ENCODE measurements at regions of chr3 and their contacts with region 1.

Region 1: DNA sequence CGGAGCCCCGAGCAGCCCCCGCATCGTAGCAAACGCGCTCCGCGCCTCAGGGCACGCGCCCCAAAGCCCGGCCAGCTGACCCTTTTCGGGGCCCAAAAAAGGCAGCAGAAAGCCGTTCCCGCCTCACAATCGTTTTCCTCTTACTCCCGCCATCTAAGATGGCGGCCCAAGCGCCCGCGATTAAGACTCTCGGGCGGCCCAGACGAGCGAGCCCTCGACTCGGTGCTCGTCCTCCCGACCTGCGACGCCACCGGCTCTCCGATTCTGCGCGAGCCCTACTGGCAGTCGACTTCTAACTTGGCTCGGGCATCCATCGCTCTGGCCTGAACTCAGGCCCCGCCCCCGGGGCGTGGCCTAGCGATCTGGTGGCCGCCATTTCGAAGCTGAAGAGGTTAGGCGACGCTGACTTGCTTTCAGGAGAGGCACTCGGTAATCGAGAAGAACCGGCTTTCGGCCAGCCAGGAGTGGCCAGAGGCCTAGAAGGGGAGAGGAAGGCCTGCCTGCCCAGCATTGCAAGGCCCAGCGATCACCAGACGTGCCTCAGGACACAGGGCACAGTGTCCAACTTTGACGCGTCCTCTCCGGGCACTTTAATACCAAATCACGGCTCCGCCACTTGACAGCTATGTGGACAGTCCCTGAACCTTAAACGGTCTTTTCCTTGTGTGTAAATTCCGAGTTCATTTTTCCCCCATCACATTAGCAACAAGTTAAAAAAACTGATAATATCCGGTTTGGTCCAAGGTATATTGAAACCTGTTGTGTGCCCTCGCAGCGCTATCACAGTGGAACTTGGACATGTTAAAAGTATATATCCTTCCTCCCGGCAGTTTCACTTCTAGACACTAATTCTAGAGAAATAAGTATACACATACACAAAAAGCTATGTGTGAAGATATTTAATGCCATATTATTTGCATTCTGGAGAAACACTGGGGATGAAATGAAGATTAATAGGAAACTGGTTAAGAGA is at the start of gene RAF1:
- DNase-seq: peak; percentile 96 to 99 (median 97)
- ATAC-seq: peak; percentile 92
- H3K4me3 ChIP-seq: peak within 1 kb of the TSS; percentile 83
- H3K4me3 Mint-ChIP-seq: peak within 1 kb of the TSS; percentile 100
- H3K27ac ChIP-seq: peak within 1 kb of the TSS; percentile 94 to 99
- H3K27ac Mint-ChIP-seq: peak within 1 kb of the TSS; percentile 94
- H3K4me1 ChIP-seq: peaks cover 32% of the 10 kb centered on the region
- H3K4me1 Mint-ChIP-seq: peaks cover 44% of the 10 kb centered on the region
- H3K27me3 ChIP-seq: no peaks in the 10 kb centered on the region
- H3K27me3 Mint-ChIP-seq: no peaks in the 10 kb centered on the region
- CTCF ChIP-seq: no peak
- total RNA-seq, gene RAF1: 127 to 139 TPM

Region 2: GRCh38 chr3:11271986-11272904 is 1392.0 kb before region 1 on chr3 and contains the start of gene ATG7:
- CTCF ChIA-PET with region 1: no interaction called
- POLR2A ChIA-PET with region 1: no interaction called
- intact Hi-C with region 1: loop called in 1 of 2 experiments (anchors 10 kb)
- DNase-seq: peak; percentile 92 to 99 (median 96)
- ATAC-seq: peak; percentile 96
- H3K4me3 ChIP-seq: peak within 1 kb of the TSS; percentile 90
- H3K4me3 Mint-ChIP-seq: peak within 1 kb of the TSS; percentile 98
- H3K27ac ChIP-seq: peak within 1 kb of the TSS; percentile 78 to 90
- H3K27ac Mint-ChIP-seq: peak within 1 kb of the TSS; percentile 98
- H3K4me1 ChIP-seq: peaks cover 24% of the 10 kb centered on the region
- H3K4me1 Mint-ChIP-seq: peaks cover 54% of the 10 kb centered on the region
- H3K27me3 ChIP-seq: no peaks in the 10 kb centered on the region
- H3K27me3 Mint-ChIP-seq: no peaks in the 10 kb centered on the region
- CTCF ChIP-seq: no peak
- total RNA-seq, gene ATG7: 21.4 to 25.7 TPM

Region 3: DNA sequence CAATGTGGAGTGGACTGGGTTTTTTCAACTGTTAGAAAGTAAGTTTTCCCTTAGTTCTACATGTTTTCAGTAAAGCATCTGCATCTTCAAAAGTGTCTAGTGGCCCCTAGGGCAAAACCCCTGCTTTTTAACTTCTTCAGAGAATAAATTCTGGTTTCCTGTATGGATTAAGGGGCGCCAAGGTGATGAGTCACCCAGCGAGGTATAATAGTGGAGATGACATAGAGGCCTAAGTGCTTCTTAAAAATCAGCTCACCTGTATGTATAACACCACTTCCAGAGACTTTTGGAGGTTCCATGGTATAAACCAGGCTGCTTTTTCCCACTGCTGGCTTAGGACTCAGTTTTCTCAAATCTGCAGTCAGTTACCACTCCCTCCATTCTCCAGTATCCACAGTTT is 591.1 kb before region 1 on chr3:
- CTCF ChIA-PET with region 1: no interaction called
- POLR2A ChIA-PET with region 1: no interaction called
- intact Hi-C with region 1: no loop called
- DNase-seq: no peak
- ATAC-seq: no peak
- H3K4me3 ChIP-seq: no peak overlapping the region
- H3K4me3 Mint-ChIP-seq: no peak overlapping the region
- H3K27ac ChIP-seq: no peak overlapping the region
- H3K27ac Mint-ChIP-seq: no peak overlapping the region
- H3K4me1 ChIP-seq: no peaks in the 10 kb centered on the region
- H3K4me1 Mint-ChIP-seq: no peaks in the 10 kb centered on the region
- H3K27me3 ChIP-seq: no peaks in the 10 kb centered on the region
- H3K27me3 Mint-ChIP-seq: peaks cover 8% of the 10 kb centered on the region
- CTCF ChIP-seq: no peak

Region 4: GRCh38 chr3:12489832-12490231 is 174.4 kb before region 1 on chr3:
- CTCF ChIA-PET with region 1: no interaction called
- POLR2A ChIA-PET with region 1: interaction called, 22 read pairs
- intact Hi-C with region 1: loop called in 1 of 2 experiments (anchors 5 kb)
- DNase-seq: no peak
- ATAC-seq: no peak
- H3K4me3 ChIP-seq: no peak overlapping the region
- H3K4me3 Mint-ChIP-seq: no peak overlapping the region
- H3K27ac ChIP-seq: no peak overlapping the region
- H3K27ac Mint-ChIP-seq: no peak overlapping the region
- H3K4me1 ChIP-seq: peaks cover 8% of the 10 kb centered on the region
- H3K4me1 Mint-ChIP-seq: peaks cover 29% of the 10 kb centered on the region
- H3K27me3 ChIP-seq: no peaks in the 10 kb centered on the region
- H3K27me3 Mint-ChIP-seq: no peaks in the 10 kb centered on the region
- CTCF ChIP-seq: no peak

Region 5: DNA sequence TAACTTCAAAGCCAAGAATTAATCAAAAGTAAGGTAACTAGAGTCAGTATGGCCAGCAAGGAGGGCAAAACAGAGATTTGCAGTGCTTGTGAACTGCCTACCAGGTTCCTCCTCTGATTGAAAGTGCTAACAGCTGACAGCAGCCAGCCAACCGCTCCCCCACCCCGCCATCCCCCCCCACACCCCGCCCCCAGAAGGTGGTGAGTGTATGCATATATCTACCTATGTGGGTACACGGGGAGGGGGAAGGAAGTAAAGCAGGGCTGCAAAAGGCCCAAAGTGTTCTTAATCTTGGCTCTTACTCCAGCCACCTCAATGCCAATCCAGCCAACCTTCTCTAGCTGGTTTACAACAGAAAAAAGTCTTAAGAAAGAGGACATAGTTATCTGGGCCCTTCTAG is 51.0 kb before region 1 on chr3:
- CTCF ChIA-PET with region 1: interaction called, 3 read pairs
- POLR2A ChIA-PET with region 1: interaction called, 15 read pairs
- intact Hi-C with region 1: no loop called
- DNase-seq: peak in 3 of 14 experiments; percentile 14 to 43 (median 15)
- ATAC-seq: peak; percentile 71
- H3K4me3 ChIP-seq: no peak overlapping the region
- H3K4me3 Mint-ChIP-seq: no peak overlapping the region
- H3K27ac ChIP-seq: no peak overlapping the region
- H3K27ac Mint-ChIP-seq: peak overlapping the region; percentile 27
- H3K4me1 ChIP-seq: no peaks in the 10 kb centered on the region
- H3K4me1 Mint-ChIP-seq: peaks cover 55% of the 10 kb centered on the region
- H3K27me3 ChIP-seq: no peaks in the 10 kb centered on the region
- H3K27me3 Mint-ChIP-seq: no peaks in the 10 kb centered on the region
- CTCF ChIP-seq: no peak

Region 6: GRCh38 chr3:12706504-12707253 is 42.5 kb after region 1 on chr3:
- CTCF ChIA-PET with region 1: no interaction called
- POLR2A ChIA-PET with region 1: interaction called, 3 read pairs
- intact Hi-C with region 1: loop called in 1 of 2 experiments (anchors 1 kb)
- DNase-seq: peak; percentile 12 to 81 (median 35)
- ATAC-seq: peak; percentile 99
- H3K4me3 ChIP-seq: no peak overlapping the region
- H3K4me3 Mint-ChIP-seq: no peak overlapping the region
- H3K27ac ChIP-seq: no peak overlapping the region
- H3K27ac Mint-ChIP-seq: no peak overlapping the region
- H3K4me1 ChIP-seq: no peaks in the 10 kb centered on the region
- H3K4me1 Mint-ChIP-seq: no peaks in the 10 kb centered on the region
- H3K27me3 ChIP-seq: no peaks in the 10 kb centered on the region
- H3K27me3 Mint-ChIP-seq: no peaks in the 10 kb centered on the region
- CTCF ChIP-seq: peak; percentile 77

Region 7: DNA sequence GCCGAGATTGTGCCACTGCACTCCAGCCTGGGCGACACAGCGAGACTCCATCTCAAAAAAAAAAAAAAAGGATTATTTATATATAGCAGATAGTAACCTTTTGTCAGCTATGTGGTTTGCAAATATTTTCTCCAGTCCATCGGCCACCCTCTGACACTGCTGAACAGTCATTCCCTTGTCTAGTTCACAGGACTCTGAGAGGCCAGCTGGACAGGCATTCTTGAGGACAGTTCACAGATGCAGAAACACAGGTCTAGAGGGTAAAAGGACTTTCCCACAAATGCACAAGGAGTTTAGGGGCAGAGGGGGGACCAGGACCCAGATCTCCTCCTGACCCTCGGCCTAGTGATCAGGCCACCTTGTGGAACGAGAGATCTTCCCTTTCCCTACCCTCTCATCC is 102.3 kb after region 1 on chr3:
- CTCF ChIA-PET with region 1: no interaction called
- POLR2A ChIA-PET with region 1: no interaction called
- intact Hi-C with region 1: no loop called
- DNase-seq: no peak
- ATAC-seq: no peak
- H3K4me3 ChIP-seq: no peak overlapping the region
- H3K4me3 Mint-ChIP-seq: no peak overlapping the region
- H3K27ac ChIP-seq: no peak overlapping the region
- H3K27ac Mint-ChIP-seq: no peak overlapping the region
- H3K4me1 ChIP-seq: no peaks in the 10 kb centered on the region
- H3K4me1 Mint-ChIP-seq: no peaks in the 10 kb centered on the region
- H3K27me3 ChIP-seq: no peaks in the 10 kb centered on the region
- H3K27me3 Mint-ChIP-seq: no peaks in the 10 kb centered on the region
- CTCF ChIP-seq: no peak

Region 8: GRCh38 chr3:12841149-12841970 is 177.1 kb after region 1 on chr3 and contains the start of gene RPL32:
- CTCF ChIA-PET with region 1: interaction called, 4 read pairs
- POLR2A ChIA-PET with region 1: interaction called, 10 read pairs
- intact Hi-C with region 1: no loop called
- DNase-seq: peak; percentile 76 to 96 (median 82)
- ATAC-seq: peak; percentile 91
- H3K4me3 ChIP-seq: peak within 1 kb of the TSS; percentile 86
- H3K4me3 Mint-ChIP-seq: peak within 1 kb of the TSS; percentile 93
- H3K27ac ChIP-seq: peak within 1 kb of the TSS; percentile 90 to 94
- H3K27ac Mint-ChIP-seq: peak within 1 kb of the TSS; percentile 99
- H3K4me1 ChIP-seq: peaks cover 39% of the 10 kb centered on the region
- H3K4me1 Mint-ChIP-seq: peaks cover 55% of the 10 kb centered on the region
- H3K27me3 ChIP-seq: no peaks in the 10 kb centered on the region
- H3K27me3 Mint-ChIP-seq: no peaks in the 10 kb centered on the region
- CTCF ChIP-seq: peak; percentile 74
- total RNA-seq, gene RPL32: 4,308 to 4,667 TPM

Region 9: DNA sequence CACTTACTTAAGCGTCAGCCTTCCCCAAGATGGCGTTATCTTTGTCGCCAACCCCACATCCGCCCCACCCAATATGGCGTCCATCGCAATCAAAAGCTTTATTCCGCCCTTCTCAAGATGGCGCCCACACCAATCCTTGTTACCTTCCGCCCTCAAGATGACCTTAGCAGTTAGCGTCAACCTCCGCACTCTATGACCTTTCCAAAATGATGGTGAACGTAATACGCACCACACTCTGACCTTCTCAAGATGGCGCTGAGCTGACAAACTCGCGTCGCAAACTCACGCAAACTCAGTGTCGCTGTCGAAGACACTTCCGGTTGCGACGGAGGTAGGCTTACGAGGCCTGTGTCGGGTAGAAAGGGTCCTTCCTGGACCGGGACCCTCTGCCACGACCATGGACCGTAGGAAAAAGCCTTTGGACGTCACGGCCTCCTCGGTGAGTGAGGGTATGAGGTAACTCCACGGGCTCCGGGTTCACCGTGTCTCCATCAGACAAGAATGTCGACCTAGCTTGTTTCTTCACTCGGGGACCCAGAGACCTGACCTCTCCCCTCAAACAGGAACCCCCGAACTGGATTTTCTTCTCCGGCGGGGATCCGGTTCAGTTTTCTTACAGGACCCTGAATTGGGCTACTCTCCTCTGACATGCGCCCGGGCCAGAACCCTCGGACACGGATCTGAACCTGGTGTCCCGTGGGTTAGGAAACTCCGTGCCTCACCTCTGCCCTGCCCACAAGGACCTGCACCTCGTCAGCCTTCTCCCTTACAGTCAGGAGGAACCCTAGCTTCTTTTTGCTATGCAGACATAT is 1987.4 kb after region 1 on chr3 and contains the start of gene CCDC174:
- CTCF ChIA-PET with region 1: no interaction called
- POLR2A ChIA-PET with region 1: interaction called, 15 read pairs
- intact Hi-C with region 1: loop called in 1 of 2 experiments (anchors 5 kb)
- DNase-seq: peak; percentile 90 to 100 (median 94)
- ATAC-seq: peak; percentile 97
- H3K4me3 ChIP-seq: peak within 1 kb of the TSS; percentile 75
- H3K4me3 Mint-ChIP-seq: peak within 1 kb of the TSS; percentile 87
- H3K27ac ChIP-seq: peak within 1 kb of the TSS; percentile 76 to 97
- H3K27ac Mint-ChIP-seq: peak within 1 kb of the TSS; percentile 85
- H3K4me1 ChIP-seq: peaks cover 29% of the 10 kb centered on the region
- H3K4me1 Mint-ChIP-seq: peaks cover 61% of the 10 kb centered on the region
- H3K27me3 ChIP-seq: no peaks in the 10 kb centered on the region
- H3K27me3 Mint-ChIP-seq: no peaks in the 10 kb centered on the region
- CTCF ChIP-seq: no peak
- total RNA-seq, gene CCDC174: 32.9 to 37.5 TPM